Endothelial cell of umbilical vein (primary cell): ENCODE measurements at regions of chr14 and their contacts with region 1.

Region 1: DNA sequence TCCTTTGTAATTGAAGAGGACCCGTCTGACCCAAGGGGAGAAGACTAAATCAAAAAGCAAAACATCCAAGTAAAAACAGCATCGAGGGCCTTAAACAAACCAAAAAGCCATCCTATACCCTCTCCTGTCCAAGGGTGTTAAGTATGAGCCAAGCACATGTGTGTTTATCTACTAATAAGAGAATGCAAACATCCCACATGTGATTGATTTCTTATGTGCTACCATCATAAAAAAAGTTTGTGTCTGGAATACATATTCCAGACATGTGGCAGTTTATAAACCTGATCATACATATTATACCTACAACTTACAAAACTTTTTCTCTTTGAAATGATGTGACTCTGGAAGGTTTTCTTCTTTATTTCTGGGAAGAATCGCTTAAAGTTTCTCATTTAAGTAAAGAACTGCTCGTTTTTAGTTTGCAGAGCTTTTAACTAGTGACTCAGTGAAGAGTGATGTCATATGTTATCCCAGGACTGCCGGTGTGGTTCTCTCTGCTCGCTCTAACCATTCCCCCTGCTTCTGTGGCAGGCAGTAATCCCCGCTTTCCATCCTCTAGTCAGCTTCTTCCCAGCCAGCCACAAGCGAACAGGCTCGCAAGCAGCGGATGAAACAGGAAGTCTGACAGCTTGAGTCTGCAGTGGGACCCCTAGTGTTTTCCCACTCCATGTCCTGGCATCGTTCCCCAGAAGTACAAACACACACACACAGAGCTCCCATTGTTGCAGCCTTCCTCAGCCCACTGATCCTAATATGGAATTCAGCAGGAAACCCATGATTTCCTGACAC is 431 bp upstream of the RHOJ start:
- DNase-seq: peak; percentile 100
- H3K4me3 ChIP-seq: peak overlapping the region; percentile 65 to 100 (median 80)
- H3K27ac ChIP-seq: peak overlapping the region; percentile 100
- H3K4me1 ChIP-seq: peaks cover 36% of the 10 kb centered on the region
- H3K27me3 ChIP-seq: no peaks in the 10 kb centered on the region
- CTCF ChIP-seq: peak; percentile 25 to 47
- POLR2A ChIP-seq: no peak

Region 2: DNA sequence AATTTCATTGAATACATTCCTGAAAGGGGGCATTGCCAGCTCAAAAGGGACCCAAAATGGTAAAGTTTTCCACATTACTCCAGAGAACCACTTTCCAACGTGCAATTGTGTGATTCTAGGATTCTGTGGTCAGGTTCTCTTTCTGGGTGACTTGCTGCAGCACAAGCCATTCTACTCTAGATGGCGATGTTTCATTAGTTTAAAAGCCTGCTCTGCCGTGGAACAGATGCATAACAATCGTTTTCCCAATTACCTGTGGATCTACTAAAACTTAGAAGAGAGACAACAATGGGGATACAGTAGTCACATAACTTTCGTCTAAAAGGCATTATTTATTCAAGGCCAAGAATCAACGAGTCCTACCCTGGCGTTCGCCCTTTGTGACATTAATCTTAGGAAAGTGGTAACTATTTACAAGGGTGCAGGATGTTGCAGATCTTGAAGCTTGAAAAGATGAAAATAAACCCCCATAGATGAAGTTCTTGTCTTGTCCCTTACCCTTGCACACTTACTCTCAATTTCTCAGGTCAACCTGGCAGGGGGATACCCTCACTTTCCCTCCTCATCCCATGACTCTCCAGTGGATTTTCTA is 1040.7 kb before region 1 on chr14:
- CTCF ChIA-PET with region 1: no interaction called
- POLR2A ChIA-PET with region 1: no interaction called
- dilution Hi-C with region 1: no loop called
- intact Hi-C with region 1: loop called (anchors 1 kb)
- DNase-seq: peak; percentile 46
- H3K4me3 ChIP-seq: no peak overlapping the region
- H3K27ac ChIP-seq: no peak overlapping the region
- H3K4me1 ChIP-seq: no peaks in the 10 kb centered on the region
- H3K27me3 ChIP-seq: peaks cover 7 to 10% of the 10 kb centered on the region in 2 experiments
- CTCF ChIP-seq: peak; percentile 62 to 69
- POLR2A ChIP-seq: no peak

Region 3: GRCh38 chr14:63051966-63052365 is 151.8 kb before region 1 on chr14:
- CTCF ChIA-PET with region 1: no interaction called
- POLR2A ChIA-PET with region 1: no interaction called
- dilution Hi-C with region 1: no loop called
- intact Hi-C with region 1: no loop called
- DNase-seq: no peak
- H3K4me3 ChIP-seq: no peak overlapping the region
- H3K27ac ChIP-seq: no peak overlapping the region
- H3K4me1 ChIP-seq: no peaks in the 10 kb centered on the region
- H3K27me3 ChIP-seq: peaks cover 22 to 27% of the 10 kb centered on the region in 2 experiments
- CTCF ChIP-seq: no peak
- POLR2A ChIP-seq: no peak

Region 4: GRCh38 chr14:63182968-63183367 is 20.8 kb before region 1 on chr14:
- CTCF ChIA-PET with region 1: interaction called, 12 read pairs
- POLR2A ChIA-PET with region 1: interaction called, 12 read pairs
- dilution Hi-C with region 1: no loop called
- intact Hi-C with region 1: loop called (anchors 1 kb)
- DNase-seq: peak; percentile 95
- H3K4me3 ChIP-seq: no peak overlapping the region
- H3K27ac ChIP-seq: peak overlapping the region; percentile 79
- H3K4me1 ChIP-seq: peaks cover 50% of the 10 kb centered on the region
- H3K27me3 ChIP-seq: no peaks in the 10 kb centered on the region
- CTCF ChIP-seq: no peak
- POLR2A ChIP-seq: no peak

Region 5: GRCh38 chr14:63192085-63192484 is 11.7 kb before region 1 on chr14:
- CTCF ChIA-PET with region 1: interaction called, 48 read pairs
- POLR2A ChIA-PET with region 1: interaction called, 30 read pairs
- dilution Hi-C with region 1: no loop called
- intact Hi-C with region 1: loop called (anchors 1 kb)
- DNase-seq: peak; percentile 93
- H3K4me3 ChIP-seq: no peak overlapping the region
- H3K27ac ChIP-seq: peak overlapping the region; percentile 84
- H3K4me1 ChIP-seq: peaks cover 26% of the 10 kb centered on the region
- H3K27me3 ChIP-seq: no peaks in the 10 kb centered on the region
- CTCF ChIP-seq: no peak
- POLR2A ChIP-seq: peak; percentile 34

Region 6: DNA sequence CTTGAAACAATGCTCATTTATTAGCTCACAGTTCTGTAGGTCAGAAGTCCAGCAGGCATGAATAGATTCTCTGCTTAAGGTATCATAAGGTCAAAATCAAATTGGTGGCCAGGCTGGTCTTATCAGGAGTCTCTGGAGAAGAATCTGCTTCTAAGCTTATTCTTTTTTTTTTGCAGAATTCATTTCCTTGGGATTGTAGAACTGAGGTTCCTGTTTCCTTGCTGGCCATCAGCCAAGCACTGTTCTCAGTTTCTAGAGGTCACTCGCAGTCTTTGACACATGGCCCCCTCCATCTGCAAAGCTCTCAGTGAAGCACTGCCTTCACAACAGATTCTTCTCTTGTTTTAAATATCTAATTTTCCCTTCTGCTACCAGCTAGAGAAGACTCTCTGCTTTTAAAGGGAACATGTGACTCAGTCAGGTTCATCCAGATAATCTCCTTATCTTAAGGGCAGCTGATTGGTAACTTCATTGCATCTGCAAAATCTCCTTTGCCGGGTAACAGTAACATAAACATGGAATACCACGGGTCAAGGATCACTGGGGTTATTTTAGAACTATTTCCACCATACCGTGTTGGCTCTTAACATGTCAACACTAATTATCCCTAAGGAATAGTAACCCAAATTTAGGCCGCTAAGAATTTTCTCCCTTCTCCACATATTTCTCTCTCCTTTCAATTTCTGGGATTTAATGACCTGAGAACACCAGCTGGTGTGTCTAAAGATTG is 25.7 kb after region 1 on chr14:
- CTCF ChIA-PET with region 1: interaction called, 6 read pairs
- POLR2A ChIA-PET with region 1: interaction called, 7 read pairs
- dilution Hi-C with region 1: no loop called
- intact Hi-C with region 1: loop called (anchors 1 kb)
- DNase-seq: peak; percentile 88
- H3K4me3 ChIP-seq: no peak overlapping the region
- H3K27ac ChIP-seq: no peak overlapping the region
- H3K4me1 ChIP-seq: peaks cover 46% of the 10 kb centered on the region
- H3K27me3 ChIP-seq: no peaks in the 10 kb centered on the region
- CTCF ChIP-seq: no peak
- POLR2A ChIP-seq: no peak

Region 7: DNA sequence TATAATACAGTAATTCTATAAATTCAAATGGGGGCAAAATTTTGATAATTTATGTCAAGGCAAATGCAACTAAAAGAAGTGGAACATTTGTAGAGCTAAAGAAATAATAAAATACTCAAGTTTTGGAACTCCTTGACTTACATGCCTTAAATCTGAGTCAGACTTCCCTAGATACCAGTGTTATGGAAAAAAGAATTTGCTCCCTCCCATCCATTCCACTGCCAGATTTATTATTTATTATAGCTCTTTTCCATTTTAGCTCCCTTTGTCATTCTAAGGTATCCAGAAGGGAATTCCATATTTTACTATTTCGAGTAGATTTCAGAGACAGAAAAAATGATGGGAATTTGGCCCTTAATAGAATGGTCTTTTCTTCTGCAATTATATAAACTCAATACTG is 44.4 kb after region 1 on chr14:
- CTCF ChIA-PET with region 1: no interaction called
- POLR2A ChIA-PET with region 1: interaction called, 5 read pairs
- dilution Hi-C with region 1: no loop called
- intact Hi-C with region 1: loop called (anchors 2 kb)
- DNase-seq: peak; percentile 84
- H3K4me3 ChIP-seq: no peak overlapping the region
- H3K27ac ChIP-seq: peak overlapping the region; percentile 58
- H3K4me1 ChIP-seq: peaks cover 20% of the 10 kb centered on the region
- H3K27me3 ChIP-seq: no peaks in the 10 kb centered on the region
- CTCF ChIP-seq: no peak
- POLR2A ChIP-seq: no peak

Region 8: DNA sequence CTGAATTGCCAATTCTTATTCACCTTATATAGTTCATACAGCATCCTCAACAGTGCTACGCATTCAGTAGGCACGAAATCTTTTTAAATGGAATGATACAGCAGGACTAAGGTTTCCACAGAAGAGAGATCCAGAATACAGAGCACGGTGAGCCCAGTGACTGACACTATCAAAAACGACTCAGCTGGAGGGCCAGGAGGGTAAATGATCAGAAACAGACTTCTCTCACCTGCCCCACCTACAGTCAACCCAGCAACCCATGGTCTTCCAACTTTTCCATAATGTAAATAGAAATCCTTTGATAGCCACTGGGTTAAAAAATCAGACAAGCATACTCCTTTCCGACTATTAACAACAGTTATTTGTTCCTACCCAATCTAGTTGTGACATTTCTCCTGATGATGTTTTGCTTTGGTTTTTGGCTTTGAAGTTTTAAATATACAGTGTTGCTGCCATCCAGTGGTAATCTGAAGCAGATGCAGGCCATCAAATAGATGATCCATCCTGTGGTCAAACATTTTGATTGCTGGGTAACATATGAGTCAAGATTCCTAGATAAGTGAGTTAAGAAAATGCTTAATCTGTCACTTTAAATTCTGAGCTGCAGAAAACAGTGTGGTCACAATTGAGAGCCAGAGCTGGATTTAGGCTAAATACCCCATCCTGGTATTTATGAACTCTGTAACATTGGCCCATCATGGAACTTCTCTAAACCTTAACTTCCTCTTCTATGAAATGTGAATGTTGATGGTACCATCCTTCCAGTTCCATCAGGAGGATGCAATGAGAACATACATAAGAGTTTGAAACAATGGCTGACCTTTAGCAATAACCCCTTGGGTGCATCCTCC is 72.9 kb after region 1 on chr14:
- CTCF ChIA-PET with region 1: interaction called, 27 read pairs
- POLR2A ChIA-PET with region 1: no interaction called
- dilution Hi-C with region 1: no loop called
- intact Hi-C with region 1: loop called (anchors 1 kb)
- DNase-seq: peak; percentile 64
- H3K4me3 ChIP-seq: no peak overlapping the region
- H3K27ac ChIP-seq: no peak overlapping the region
- H3K4me1 ChIP-seq: peaks cover 3% of the 10 kb centered on the region
- H3K27me3 ChIP-seq: no peaks in the 10 kb centered on the region
- CTCF ChIP-seq: peak; percentile 56 to 63
- POLR2A ChIP-seq: no peak